ENCODE measurements at regions of chr19 and their contacts with region 1.

Region 1: DNA sequence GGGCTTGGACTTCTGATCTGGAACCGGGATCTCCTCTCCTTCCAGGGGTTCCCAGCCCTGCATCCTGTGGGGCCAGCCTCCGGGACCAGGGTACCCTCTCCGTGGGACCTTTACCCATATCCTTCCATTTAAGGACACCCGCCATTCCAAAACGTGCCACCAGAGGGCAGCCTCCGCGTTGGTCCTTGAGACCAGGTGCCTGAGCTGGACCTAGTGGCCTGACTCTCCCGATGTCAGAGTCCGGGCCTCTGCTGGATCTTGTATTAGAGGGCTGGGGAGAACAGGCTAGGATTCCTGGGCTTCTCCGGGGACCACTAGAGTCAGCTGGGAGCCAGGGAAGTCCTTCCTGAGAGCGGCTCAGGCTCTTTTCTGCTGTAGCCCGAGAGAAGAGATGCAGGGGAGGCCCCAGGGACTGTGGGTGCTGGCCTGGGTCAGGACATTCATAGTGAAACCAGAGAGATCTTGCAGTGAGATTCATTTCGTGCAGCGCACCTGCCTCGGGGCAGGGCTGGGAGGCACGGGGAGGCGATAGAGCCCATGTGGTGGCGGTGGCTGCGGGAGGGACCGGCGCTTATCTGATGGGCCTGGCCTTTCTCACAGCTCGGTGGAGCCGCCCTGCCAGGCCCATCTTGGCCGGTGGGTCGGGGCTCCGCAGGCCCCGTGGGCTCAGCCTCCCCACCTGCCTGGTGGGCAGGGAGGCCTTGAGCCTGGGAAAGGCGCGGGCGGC is 9.8 kb upstream of the SLC7A10 start:
- DNase-seq: peak; percentile 70 to 99
- H3K4me3 ChIP-seq: no peak overlapping the region
- H3K27ac ChIP-seq: no peak overlapping the region
- H3K4me1 ChIP-seq: no peaks in the 10 kb centered on the region; a peak in 1 of 7 replicates
- H3K27me3 ChIP-seq: no peaks in the 10 kb centered on the region
- CTCF ChIP-seq: peak; percentile 90 to 91 (median 91)
- EP300 ChIP-seq: no peak
- POLR2A ChIP-seq: no peak
- RAD21 ChIP-seq: peak; percentile 87 to 94

Region 2: DNA sequence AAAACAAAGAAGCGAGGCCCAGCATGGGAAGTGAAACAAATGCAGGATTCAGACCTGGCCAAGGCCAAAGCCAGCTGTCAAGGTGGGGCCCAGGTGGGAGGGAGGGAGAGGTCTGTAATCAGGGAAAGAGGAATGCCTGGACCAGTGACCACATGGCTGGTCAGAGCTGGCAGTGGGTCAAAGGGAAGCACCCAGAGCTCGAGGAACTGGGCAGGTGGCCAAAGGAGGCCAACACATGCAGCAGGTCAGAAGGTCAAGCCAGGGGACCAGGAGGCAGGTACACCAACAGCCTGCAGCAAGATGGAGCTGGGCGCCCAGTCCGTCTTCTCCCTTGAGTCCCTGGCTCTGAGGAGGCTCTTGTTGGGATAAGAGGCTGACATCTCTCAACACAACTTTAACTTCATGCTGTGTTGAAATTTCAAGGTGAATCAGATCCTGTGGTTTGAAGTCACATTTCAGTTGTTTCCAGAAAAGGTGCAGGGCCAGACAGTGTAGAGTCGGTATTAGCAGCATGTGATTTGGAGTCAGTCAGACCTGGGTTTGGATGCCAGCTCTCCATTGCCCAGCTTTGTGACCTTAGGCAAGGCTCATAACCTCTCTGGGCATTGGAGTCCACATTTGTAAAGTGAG is 137.3 kb before region 1 on chr19:
- CTCF ChIA-PET with region 1: no interaction called
- POLR2A ChIA-PET with region 1: no interaction called
- DNase-seq: no peak
- H3K4me3 ChIP-seq: no peak overlapping the region
- H3K27ac ChIP-seq: no peak overlapping the region
- H3K4me1 ChIP-seq: no peaks in the 10 kb centered on the region
- H3K27me3 ChIP-seq: no peaks in the 10 kb centered on the region
- CTCF ChIP-seq: no peak
- EP300 ChIP-seq: no peak
- POLR2A ChIP-seq: no peak
- RAD21 ChIP-seq: no peak

Region 3: DNA sequence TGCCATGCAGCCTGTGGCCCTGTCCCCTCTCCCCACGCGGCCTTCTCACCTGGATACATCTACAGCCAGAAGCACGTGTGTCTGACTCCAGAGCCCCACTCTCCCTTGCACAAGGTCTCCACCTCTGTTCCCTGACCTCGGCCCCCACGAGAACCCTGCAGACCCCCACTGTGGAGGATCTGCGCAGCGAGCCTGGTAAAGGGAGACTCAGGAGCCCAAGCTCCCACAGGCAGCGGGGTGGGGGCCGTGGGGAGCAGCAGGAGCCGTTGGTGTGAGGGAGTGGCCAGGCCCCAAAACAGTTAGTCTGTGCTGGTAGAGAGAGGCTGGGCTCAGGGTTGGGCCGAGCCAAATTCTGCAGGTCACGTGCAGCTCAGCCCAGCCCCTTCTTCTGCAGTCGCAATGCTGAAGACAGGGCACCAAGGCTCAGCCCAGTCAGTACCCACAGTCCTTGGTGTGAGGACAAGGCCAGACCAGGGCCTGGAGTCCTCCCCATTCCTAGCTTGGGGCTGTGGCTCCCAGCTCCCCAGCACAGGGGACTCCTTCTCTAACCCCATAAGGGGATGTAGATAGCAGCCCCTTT is 18.9 kb after region 1 on chr19:
- CTCF ChIA-PET with region 1: interaction called, 23 read pairs
- POLR2A ChIA-PET with region 1: interaction called, 3 read pairs
- DNase-seq: no peak
- H3K4me3 ChIP-seq: no peak overlapping the region
- H3K27ac ChIP-seq: no peak overlapping the region
- H3K4me1 ChIP-seq: peaks cover 0 to 4% (median under 1%) of the 10 kb centered on the region in 4 experiments; a peak in 4 of 7 replicates
- H3K27me3 ChIP-seq: no peaks in the 10 kb centered on the region; a peak in 1 of 7 replicates
- CTCF ChIP-seq: no peak
- EP300 ChIP-seq: no peak
- POLR2A ChIP-seq: no peak
- RAD21 ChIP-seq: no peak

Region 4: DNA sequence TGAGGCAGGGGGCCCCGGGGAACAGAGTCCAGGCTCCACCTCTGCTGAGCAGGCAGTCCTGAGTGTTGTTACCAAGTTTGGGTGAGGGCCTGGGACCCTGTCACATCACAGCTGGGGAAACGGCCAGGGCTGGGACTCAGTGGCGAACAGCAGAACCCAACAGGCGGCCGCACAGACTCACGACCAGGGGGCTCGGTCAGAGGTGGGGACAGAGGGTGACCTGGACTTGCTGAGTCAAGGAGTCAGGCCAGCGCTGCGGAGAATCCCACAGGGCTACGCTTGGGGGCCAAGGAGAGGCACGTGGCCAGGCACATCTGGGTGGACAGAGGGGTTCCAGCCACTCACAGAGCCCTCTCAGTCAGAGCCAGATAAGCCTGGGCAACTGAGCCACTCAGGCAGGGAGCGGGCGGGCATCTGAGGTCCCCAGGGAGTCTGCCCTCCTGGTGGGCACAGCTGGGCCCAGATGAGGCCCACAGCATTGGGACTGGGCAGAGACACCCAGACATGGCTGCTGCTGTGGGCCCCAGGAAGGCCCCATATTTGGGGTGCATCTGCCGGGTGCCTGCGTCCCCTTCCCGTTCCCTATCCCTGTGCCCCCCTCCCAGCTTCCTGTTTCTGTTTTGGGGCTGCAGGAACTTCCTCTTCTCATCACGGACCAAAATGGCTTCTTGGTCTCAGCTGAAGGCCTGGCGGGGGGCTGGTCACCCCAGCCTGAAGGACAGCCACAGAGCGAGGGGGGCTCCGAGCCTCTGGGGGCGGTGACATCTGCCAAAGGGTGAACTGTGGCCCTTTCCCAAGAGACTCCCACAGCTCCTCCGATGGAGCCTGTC is 32.9 kb after region 1 on chr19:
- CTCF ChIA-PET with region 1: interaction called, 11 read pairs
- POLR2A ChIA-PET with region 1: no interaction called
- DNase-seq: no peak
- H3K4me3 ChIP-seq: no peak overlapping the region
- H3K27ac ChIP-seq: no peak overlapping the region
- H3K4me1 ChIP-seq: peaks cover 0 to 3% (median 2%) of the 10 kb centered on the region in 4 experiments; a peak in 5 of 7 replicates
- H3K27me3 ChIP-seq: no peaks in the 10 kb centered on the region
- CTCF ChIP-seq: no peak
- EP300 ChIP-seq: no peak
- POLR2A ChIP-seq: no peak
- RAD21 ChIP-seq: no peak

Region 5: GRCh38 chr19:33388725-33389420 is 153.4 kb after region 1 on chr19:
- CTCF ChIA-PET with region 1: interaction called, 426 read pairs
- POLR2A ChIA-PET with region 1: no interaction called
- DNase-seq: peak in 1 of 2 experiments; percentile 45
- H3K4me3 ChIP-seq: no peak overlapping the region
- H3K27ac ChIP-seq: no peak overlapping the region
- H3K4me1 ChIP-seq: peaks cover 0 to 3% (median 1%) of the 10 kb centered on the region in 4 experiments; a peak in 2 of 7 replicates
- H3K27me3 ChIP-seq: no peaks in the 10 kb centered on the region
- CTCF ChIP-seq: no peak
- EP300 ChIP-seq: no peak
- POLR2A ChIP-seq: no peak
- RAD21 ChIP-seq: no peak